Transverse colon (tissue), 4 donors: ENCODE measurements at regions of chr11 and their contacts with region 1.

Region 1: DNA sequence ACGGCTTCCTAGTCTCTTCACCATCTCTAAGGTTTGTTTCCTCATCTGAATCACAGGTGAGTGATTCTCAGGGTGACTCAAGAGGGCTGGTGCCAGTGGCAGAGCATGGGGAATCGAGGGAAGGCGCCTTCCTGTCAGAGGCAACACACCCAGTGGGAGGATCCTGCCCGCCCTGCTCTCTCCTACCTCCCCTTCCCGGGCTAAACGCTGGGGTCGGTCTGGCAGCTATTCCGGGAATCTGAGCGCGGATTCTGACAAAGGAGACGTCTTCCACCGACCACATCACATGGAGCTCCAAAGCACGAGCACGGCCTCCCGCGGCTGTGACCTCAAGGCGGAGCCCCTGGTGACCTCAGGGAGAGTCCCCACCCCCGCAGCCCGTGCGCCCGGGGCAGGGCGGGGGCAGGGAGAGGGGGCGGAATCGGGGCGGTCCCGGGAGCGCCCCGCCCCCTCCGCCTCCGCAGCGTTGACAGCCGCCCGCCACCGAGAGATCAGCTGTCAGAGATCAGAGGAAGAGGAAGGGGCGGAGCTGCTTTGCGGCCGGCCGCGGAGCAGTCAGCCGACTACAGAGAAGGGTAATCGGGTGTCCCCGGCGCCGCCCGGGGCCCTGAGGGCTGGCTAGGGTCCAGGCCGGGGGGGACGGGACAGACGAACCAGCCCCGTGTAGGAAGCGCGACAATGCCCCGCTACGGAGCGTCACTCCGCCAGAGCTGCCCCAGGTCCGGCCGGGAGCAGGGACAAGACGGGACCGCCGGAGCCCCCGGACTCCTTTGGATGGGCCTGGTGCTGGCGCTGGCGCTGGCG is at the start of gene SMPD1:
- DNase-seq: peak; percentile 96
- H3K4me3 ChIP-seq: peak within 1 kb of the TSS; percentile 61 to 94 (median 82)
- H3K27ac ChIP-seq: peak within 1 kb of the TSS; percentile 85 to 96 (median 93)
- H3K4me1 ChIP-seq: peaks cover 6 to 39% (median 23%) of the 10 kb centered on the region in 4 donors
- H3K27me3 ChIP-seq: no peaks in the 10 kb centered on the region
- CTCF ChIP-seq: no peak
- EP300 ChIP-seq: no peak
- POLR2A ChIP-seq: peak; percentile 78
- total RNA-seq, gene SMPD1: 27.7 to 67.0 (median 43.2) TPM

Region 2: GRCh38 chr11:6443269-6444003 is 53.3 kb after region 1 on chr11:
- in situ Hi-C with region 1: loop called in 1 of 4 experiments (anchors 10 kb)
- intact Hi-C with region 1: no loop called
- DNase-seq: peak; percentile 61
- H3K4me3 ChIP-seq: no peak overlapping the region
- H3K27ac ChIP-seq: no peak overlapping the region
- H3K4me1 ChIP-seq: no peaks in the 10 kb centered on the region
- H3K27me3 ChIP-seq: no peaks in the 10 kb centered on the region
- CTCF ChIP-seq: peak; percentile 75 to 85 (median 82)
- EP300 ChIP-seq: no peak
- POLR2A ChIP-seq: no peak

Region 3: DNA sequence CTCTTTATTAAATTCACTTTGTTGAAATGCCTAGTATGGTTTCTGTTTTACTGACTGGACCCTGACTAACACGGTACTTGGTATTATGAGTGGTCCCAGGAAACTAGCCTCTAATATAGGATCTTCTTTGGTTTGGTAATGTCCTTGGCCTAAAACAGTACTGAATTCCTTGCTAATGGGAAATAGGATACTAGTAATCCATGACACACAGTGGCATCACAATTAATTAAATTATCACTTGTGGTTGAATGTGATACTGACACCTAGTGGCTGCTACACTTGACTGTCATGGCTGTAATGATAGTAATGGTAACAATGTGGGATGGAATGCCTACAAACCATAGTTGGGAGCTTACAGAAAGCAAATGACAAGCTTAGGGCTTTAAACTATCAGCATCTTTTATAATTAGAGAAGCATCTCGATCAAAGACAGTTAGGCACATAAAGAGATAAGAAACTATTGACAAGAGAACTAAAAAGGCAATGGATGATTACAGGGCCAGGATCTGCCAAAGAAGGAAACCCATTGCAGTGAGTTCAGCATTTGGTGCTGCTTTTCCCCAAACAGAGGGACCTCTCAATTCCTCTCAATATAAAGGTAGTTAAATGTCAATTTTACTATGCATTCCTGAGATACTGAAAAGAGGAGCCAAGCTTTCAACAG is 115.6 kb after region 1 on chr11:
- in situ Hi-C with region 1: loop called in 1 of 4 experiments (anchors 10 kb)
- intact Hi-C with region 1: no loop called
- DNase-seq: no peak
- H3K4me3 ChIP-seq: no peak overlapping the region
- H3K27ac ChIP-seq: peak overlapping the region in 2 of 4 donors; percentile 12 to 36
- H3K4me1 ChIP-seq: no peaks in the 10 kb centered on the region
- H3K27me3 ChIP-seq: no peaks in the 10 kb centered on the region
- CTCF ChIP-seq: peak; percentile 64 to 80 (median 73)
- EP300 ChIP-seq: no peak
- POLR2A ChIP-seq: no peak

Region 4: DNA sequence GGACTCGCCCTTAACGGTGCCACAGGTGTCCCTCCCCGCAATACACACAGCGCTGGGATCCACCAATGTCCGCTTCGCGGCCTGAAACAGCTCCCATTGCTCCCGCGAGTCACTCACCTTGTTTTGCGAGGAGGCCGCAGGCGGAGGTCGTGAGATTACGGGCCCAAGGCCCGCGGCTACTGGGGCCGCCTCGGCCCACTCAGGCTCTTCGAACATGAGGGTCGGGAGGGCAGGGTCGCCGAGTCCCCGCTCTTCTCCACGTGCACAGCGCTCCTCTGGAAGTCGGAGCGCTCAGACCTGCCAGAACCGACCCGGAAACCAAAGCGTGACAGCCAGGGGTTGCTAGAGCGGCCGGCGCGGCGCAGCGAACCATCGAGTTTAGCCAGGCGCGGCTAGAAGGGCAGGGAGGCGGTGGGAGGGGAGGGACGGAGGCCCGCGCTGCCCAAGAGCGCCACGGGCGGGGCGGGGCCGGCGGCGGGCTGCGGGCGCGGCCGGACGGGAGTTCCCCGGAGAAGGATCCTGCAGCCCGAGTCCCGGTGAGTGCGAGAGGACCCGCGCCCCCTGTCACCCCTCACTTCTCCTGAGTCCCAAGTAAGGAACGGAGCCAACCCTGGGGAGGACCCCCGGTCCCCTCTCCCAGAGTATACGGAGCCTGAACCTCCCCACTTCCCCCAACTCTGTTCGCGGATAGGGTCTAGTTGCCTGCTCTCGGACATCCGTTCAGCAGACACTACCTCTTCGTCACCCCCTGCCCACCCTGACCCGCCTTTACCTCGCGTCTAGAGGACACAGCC is 213.4 kb after region 1 on chr11 and contains the starts of genes ILK and RRP8:
- in situ Hi-C with region 1: loop called in 1 of 4 experiments (anchors 10 kb)
- intact Hi-C with region 1: no loop called
- DNase-seq: peak; percentile 94
- H3K4me3 ChIP-seq: peak within 1 kb of the TSS; percentile 78 to 90 (median 88)
- H3K27ac ChIP-seq: peak within 1 kb of the TSS; percentile 96 to 99 (median 97)
- H3K4me1 ChIP-seq: peaks cover 34 to 56% (median 46%) of the 10 kb centered on the region in 4 donors
- H3K27me3 ChIP-seq: no peaks in the 10 kb centered on the region
- CTCF ChIP-seq: peak in 2 of 5 experiments; percentile 22 to 24
- EP300 ChIP-seq: no peak
- POLR2A ChIP-seq: peak; percentile 70
- total RNA-seq, gene ILK: 159 to 211 (median 169) TPM
- total RNA-seq, gene RRP8: 9.7 to 145 (median 48.2) TPM

Region 5: GRCh38 chr11:6682936-6683861 is 293.1 kb after region 1 on chr11 and contains the start of gene MRPL17:
- in situ Hi-C with region 1: loop called in 1 of 4 experiments (anchors 10 kb)
- intact Hi-C with region 1: no loop called
- DNase-seq: peak; percentile 99
- H3K4me3 ChIP-seq: peak within 1 kb of the TSS; percentile 73 to 86 (median 79)
- H3K27ac ChIP-seq: peak within 1 kb of the TSS; percentile 83 to 94 (median 90)
- H3K4me1 ChIP-seq: peaks cover 8 to 23% (median 14%) of the 10 kb centered on the region in 4 donors
- H3K27me3 ChIP-seq: no peaks in the 10 kb centered on the region
- CTCF ChIP-seq: peak; percentile 83 to 96 (median 90)
- EP300 ChIP-seq: no peak
- POLR2A ChIP-seq: peak; percentile 72
- total RNA-seq, gene MRPL17: 9.3 to 62.9 (median 14.2) TPM